ENCODE measurements at regions of chr1 and their contacts with region 1.

Region 1: GRCh38 chr1:175750366-175751071 is 7.1 kb upstream of the TNR start:
- DNase-seq: no peak
- H3K4me3 Mint-ChIP-seq: no peak overlapping the region
- H3K27ac Mint-ChIP-seq: no peak overlapping the region
- H3K4me1 Mint-ChIP-seq: no peaks in the 10 kb centered on the region
- H3K27me3 Mint-ChIP-seq: peaks cover 95% of the 10 kb centered on the region
- CTCF ChIP-seq: no peak

Region 2: DNA sequence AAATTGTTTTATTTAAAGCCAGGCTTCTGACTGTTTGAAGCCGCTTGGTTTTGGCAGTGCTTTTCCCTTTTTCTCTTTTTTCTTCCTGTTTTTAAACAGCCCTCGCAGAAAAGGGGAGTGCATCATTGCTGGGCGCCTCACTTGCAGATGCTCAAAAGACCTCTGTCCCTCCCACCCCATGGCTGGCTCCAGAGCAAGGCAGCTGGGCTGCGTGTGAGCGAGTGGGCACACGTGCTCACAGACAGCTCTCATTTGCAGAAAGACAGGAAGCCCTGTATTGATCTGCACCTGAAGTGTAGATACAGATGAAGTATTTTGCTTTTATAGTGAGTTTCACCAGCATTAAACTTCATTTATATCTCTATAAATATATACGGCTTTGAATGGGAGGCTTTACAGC is 15.9 kb before region 1 on chr1:
- CTCF ChIA-PET with region 1: interaction called, 29 read pairs
- POLR2A ChIA-PET with region 1: interaction called, 3 read pairs
- intact Hi-C with region 1: no loop called
- DNase-seq: no peak
- H3K4me3 Mint-ChIP-seq: no peak overlapping the region
- H3K27ac Mint-ChIP-seq: no peak overlapping the region
- H3K4me1 Mint-ChIP-seq: no peaks in the 10 kb centered on the region
- H3K27me3 Mint-ChIP-seq: peaks cover 64% of the 10 kb centered on the region
- CTCF ChIP-seq: no peak

Region 3: GRCh38 chr1:175873290-175873935 is 122.9 kb after region 1 on chr1:
- CTCF ChIA-PET with region 1: no interaction called
- POLR2A ChIA-PET with region 1: no interaction called
- intact Hi-C with region 1: no loop called
- DNase-seq: no peak
- H3K4me3 Mint-ChIP-seq: no peak overlapping the region
- H3K27ac Mint-ChIP-seq: no peak overlapping the region
- H3K4me1 Mint-ChIP-seq: no peaks in the 10 kb centered on the region
- H3K27me3 Mint-ChIP-seq: no peaks in the 10 kb centered on the region
- CTCF ChIP-seq: no peak

Measured in MCF 10A (cell line).